Prostate gland (tissue), 2 donors: ENCODE measurements at regions of chr1 and their contacts with region 1.

Region 1: DNA sequence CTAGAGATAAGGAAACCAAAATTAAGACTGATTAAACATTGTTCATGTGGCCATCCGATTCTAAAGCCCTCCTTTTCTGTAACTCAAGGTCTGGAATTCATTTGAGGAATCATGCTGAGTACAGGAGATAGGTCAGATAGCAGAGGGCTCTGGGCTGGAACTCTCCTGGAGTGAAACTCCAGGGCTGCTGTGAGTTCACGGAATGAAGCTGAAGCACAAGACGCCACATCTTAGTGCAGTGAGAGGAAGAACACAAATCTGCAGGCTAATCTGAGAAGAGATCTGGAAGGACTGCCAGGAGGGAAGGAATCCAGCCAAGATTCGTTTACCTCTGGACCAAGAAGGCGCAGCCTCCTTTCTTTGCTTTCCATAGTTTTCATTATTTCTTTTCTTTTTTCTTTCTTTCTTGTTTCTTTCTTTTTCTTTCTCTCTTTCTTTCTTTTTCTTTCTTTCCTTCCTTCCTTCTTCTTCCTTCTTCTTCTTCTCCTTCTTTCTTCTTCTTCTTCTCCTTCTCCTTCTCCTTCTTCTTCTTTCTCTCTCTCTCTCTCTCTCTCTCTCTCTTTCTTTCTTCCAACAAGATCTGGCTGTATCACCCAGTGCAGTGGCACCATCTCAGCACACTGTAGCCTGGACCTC is 74.8 kb upstream of the ATP1B1 start:
- DNase-seq: peak; percentile 72
- H3K4me3 ChIP-seq: no peak overlapping the region
- H3K27ac ChIP-seq: no peak overlapping the region
- H3K4me1 ChIP-seq: no peaks in the 10 kb centered on the region
- H3K27me3 ChIP-seq: no peaks in the 10 kb centered on the region
- CTCF ChIP-seq: no peak
- POLR2A ChIP-seq: no peak

Region 2: GRCh38 chr1:168879916-168880734 is 151.6 kb before region 1 on chr1:
- intact Hi-C with region 1: loop called (anchors 10 kb)
- DNase-seq: no peak
- H3K4me3 ChIP-seq: no peak overlapping the region
- H3K27ac ChIP-seq: peak overlapping the region in 1 of 2 donors; percentile 15
- H3K4me1 ChIP-seq: no peaks in the 10 kb centered on the region
- H3K27me3 ChIP-seq: no peaks in the 10 kb centered on the region
- CTCF ChIP-seq: no peak
- POLR2A ChIP-seq: no peak